ENCODE measurements at regions of chr1 and their contacts with region 1.

Region 1: DNA sequence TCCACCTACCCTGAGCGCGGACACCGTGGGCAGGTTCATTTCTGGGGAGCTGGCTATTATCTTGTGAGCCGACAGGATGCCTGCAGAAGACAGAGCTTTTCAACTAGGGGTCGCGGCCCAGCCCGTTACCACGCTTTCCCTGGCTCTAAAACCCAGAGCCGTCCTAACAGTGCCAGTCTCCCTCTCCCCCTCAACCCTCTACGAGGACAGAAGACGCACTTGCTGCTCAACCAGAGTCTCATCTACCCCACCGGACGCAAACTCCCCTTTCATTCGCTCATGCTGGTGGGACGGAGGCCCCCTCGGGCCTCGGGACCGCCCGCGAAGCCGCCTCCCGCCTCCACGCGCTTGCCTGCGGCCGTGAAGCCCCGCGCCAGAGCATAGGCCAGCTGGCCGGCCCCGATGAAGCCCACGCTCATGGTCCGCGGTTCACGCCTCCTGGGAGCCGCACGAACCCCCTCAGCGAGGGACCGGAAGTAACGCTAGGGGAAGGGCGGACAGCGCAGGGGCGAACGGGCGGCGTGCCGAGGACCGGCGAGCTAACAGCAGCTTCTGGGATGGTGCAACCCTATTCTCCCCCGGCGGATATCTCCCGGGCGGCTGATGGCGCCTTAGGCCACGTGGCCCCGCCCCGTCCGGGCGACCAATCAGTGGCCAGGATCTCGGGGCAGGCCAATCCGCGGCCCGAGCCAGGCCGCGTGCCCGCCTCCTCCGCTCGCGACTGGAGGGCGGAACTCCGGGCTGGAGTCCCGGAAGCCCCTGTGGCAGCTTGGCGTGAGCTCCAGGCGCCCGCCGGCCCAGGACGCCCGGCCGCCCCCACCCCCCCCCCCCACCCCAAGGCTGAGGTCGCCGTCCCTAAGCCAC is at the start of gene PYCR2:
- DNase-seq: peak; percentile 98
- H3K4me3 ChIP-seq: peak within 1 kb of the TSS; percentile 91
- H3K27ac ChIP-seq: peak within 1 kb of the TSS; percentile 81
- H3K4me1 ChIP-seq: peaks cover 65% of the 10 kb centered on the region
- CTCF ChIP-seq: no peak
- total RNA-seq, gene PYCR2: 120 and 136 TPM in 2 replicates

Region 2: GRCh38 chr1:225290244-225290643 is 633.7 kb before region 1 on chr1:
- CTCF ChIA-PET with region 1: no interaction called
- POLR2A ChIA-PET with region 1: no interaction called
- intact Hi-C with region 1: no loop called
- DNase-seq: no peak
- H3K4me3 ChIP-seq: no peak overlapping the region
- H3K27ac ChIP-seq: no peak overlapping the region
- H3K4me1 ChIP-seq: no peaks in the 10 kb centered on the region
- CTCF ChIP-seq: no peak

Region 3: DNA sequence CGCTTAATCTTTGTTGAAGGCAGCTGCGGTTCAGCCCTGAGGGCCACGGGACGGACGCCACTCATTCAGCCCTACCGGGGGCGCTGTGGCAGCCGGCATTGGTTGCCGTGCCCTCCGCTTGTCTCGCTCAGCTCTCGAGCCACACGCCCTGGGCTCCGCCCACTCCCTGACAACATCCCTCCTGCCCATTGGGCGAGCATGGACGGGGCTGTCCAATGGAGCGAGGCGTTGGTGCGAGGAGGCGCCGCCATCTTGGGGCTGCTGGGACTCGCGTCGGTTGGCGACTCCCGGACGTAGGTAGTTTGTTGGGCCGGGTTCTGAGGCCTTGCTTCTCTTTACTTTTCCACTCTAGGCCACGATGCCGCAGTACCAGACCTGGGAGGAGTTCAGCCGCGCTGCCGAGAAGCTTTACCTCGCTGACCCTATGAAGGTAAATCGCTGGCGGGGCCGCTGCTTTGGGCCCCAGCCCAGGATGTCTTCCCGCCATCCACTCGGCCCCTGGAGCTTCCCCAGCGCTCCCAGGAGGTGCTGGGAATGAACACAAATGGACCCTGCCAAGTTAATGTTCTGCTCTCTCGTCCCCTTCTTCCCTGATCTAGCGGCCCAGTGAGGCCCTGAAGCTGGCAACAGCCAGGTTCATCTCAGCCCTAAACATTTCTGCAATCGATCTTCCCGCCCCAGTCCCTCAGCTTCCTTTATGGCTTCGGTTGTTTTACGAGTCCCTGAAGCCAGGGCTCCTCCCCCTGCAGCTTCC is 146.2 kb before region 1 on chr1 and contains the start of gene SRP9:
- CTCF ChIA-PET with region 1: no interaction called
- POLR2A ChIA-PET with region 1: interaction called, 11 read pairs
- intact Hi-C with region 1: no loop called
- DNase-seq: peak; percentile 100
- H3K4me3 ChIP-seq: peak within 1 kb of the TSS; percentile 78
- H3K27ac ChIP-seq: peak within 1 kb of the TSS; percentile 91
- H3K4me1 ChIP-seq: peaks cover 56% of the 10 kb centered on the region
- CTCF ChIP-seq: peak; percentile 91
- total RNA-seq, gene SRP9: 182 and 221 TPM in 2 replicates

Region 4: GRCh38 chr1:225944951-225945350 is 21.0 kb after region 1 on chr1:
- CTCF ChIA-PET with region 1: interaction called, 4 read pairs
- POLR2A ChIA-PET with region 1: interaction called, 83 read pairs
- intact Hi-C with region 1: loop called (anchors 1 kb)
- DNase-seq: peak; percentile 85
- H3K4me3 ChIP-seq: peak overlapping the region; percentile 34
- H3K27ac ChIP-seq: peak overlapping the region; percentile 95
- H3K4me1 ChIP-seq: peaks cover 85% of the 10 kb centered on the region
- CTCF ChIP-seq: no peak

Region 5: DNA sequence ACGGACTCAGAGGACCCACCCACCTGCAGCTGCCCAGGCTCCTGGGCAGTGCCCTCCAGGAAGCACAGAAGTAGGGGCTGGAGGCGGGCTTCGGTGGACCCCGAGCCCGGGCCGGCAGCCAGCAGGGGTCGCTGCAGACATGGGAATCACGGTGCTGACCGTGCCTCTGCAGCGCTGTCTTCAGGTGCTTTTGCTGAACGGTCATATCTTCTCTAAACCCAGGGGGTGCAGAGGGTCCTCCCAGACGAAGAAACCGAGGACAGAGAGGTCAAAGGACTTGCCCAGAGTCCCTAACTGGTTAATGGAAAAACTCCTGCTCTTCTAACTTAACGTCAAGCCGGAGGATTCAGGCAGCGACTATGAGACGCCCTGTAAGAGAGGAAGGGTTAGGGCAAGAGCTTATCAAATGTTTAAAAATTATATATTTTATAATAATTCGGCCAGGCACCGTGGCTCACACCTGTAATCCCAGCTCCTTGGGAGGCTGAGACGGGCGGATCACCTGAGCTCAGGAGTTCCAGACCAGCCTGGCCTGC is 38.6 kb after region 1 on chr1:
- CTCF ChIA-PET with region 1: interaction called, 6 read pairs
- POLR2A ChIA-PET with region 1: interaction called, 4 read pairs
- intact Hi-C with region 1: loop called (anchors 2 kb)
- DNase-seq: peak; percentile 78
- H3K4me3 ChIP-seq: no peak overlapping the region
- H3K27ac ChIP-seq: no peak overlapping the region
- H3K4me1 ChIP-seq: peaks cover 8% of the 10 kb centered on the region
- CTCF ChIP-seq: peak; percentile 99

Region 6: DNA sequence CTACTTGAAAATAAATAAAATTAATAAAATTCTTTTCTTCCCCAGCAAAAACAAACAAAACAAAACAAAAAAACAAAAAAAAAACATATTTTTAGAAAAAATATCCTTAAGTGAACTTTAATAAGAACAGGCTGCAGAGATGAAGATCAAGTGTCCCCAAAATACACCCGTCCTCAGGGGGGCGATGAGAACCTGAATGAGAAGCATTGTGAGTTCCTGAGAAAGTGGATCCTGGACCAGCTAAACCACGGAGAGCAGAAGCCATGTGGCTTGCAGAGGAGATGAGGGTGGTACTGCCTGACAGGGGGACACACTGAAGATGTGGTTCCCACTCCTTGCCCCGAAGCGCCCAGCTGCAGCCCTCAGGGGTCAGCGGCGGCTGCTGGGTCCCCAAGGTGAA is 725.9 kb after region 1 on chr1:
- CTCF ChIA-PET with region 1: no interaction called
- POLR2A ChIA-PET with region 1: no interaction called
- intact Hi-C with region 1: loop called (anchors 10 kb)
- DNase-seq: peak; percentile 66
- H3K4me3 ChIP-seq: no peak overlapping the region
- H3K27ac ChIP-seq: peak overlapping the region; percentile 66
- H3K4me1 ChIP-seq: peaks cover 10% of the 10 kb centered on the region
- CTCF ChIP-seq: peak; percentile 82